Activated CD4-positive, alpha-beta memory T cell treated with anti-CD3 and anti-CD28 coated beads, Interleukin-2, amount 10 ng/mL, durations not matched to agents 7 days and 5 days (primary cell): ENCODE measurements at regions of chr14 and their contacts with region 1.

Region 1: DNA sequence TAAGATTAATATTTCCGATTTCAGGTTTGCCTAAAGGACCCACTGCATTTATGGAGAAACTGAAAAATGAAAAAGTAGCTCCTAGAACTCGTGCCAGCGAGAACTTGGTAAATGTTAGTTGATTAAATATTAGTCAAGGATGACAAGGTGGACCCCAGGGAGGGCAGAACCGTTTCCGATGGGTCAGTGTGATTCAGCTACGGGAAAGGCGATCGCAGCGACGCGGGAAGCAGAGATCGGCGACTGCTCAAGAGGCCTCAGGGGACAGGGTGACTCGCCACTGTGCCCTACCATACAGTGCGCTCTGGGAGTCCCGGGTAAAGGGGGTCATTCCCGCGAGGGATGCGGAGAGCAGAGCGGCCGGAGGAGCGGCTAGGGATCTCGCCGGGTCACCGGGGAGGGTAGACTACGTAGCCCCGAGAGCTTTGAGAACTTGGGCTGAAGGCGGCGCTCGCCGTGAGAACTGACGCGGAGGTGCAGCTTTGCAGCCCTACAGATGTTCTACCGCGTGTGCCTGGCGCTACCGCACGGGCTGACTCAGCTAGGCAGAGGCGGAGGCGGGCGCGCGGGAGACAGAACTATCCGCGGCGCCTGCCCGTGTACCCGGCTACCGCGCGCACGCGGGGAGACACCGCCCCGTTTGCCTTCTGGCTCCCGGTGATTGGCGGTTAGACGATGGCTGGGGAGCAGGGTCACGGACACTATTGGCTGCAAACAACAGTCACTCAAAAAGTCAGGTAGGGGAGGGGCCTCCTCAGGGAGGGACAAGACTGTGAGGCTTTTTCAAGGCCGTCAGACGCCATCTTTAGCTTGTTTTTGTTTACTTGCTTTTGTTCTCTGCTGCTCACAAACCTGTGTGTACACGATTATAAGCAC is 3.2 kb downstream of the C14orf93 start:
- DNase-seq: peak; percentile 98
- H3K4me3 Mint-ChIP-seq: peak overlapping the region; percentile 93
- H3K27ac Mint-ChIP-seq: peak overlapping the region; percentile 94
- H3K4me1 Mint-ChIP-seq: peaks cover 51% of the 10 kb centered on the region
- H3K27me3 Mint-ChIP-seq: no peaks in the 10 kb centered on the region

Region 2: DNA sequence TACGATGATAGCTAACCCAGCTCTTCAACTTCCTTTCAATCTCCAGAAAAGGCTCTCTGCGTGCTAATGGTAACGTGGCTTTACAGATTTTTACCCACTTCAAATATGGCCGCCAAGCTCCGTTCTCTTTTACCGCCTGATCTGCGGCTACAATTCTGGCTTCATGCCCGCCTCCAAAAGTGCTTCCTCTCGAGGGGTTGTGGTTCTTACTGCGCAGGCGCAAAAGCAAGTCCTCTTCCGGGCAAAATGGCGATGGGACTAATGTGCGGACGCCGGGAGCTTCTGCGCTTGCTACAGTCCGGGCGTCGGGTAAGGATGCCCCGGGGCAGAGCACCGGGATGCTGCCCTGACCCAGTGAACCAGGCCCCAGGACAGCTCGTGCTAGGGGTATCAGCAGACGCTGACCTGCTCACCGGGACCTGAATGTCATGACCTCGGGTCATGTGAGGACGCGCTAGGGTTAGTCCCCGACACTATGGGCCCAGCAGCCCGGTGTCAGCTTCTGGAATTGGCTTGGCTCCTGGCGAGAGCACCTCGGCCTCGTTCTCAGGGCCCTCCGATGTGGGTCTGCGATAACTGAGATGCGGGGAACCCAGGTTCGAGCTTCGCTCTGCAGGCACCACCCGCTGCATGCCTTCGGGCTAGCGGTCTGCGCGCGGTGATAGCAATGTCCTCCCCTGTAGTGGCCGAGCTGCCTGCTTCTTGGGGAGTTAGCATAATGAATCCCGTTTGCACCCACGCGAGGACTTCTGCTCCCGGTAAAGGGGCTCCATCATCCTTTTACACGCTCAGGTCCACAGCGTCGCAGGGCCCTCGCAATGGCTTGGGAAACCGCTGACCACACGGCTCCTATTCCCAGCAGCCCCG is 240.1 kb before region 1 on chr14 and contains the start of gene OXA1L:
- CTCF ChIA-PET with region 1: no interaction called
- POLR2A ChIA-PET with region 1: interaction called, 13 read pairs
- DNase-seq: peak; percentile 97
- H3K4me3 Mint-ChIP-seq: peak within 1 kb of the TSS; percentile 93
- H3K27ac Mint-ChIP-seq: peak within 1 kb of the TSS; percentile 97
- H3K4me1 Mint-ChIP-seq: peaks cover 35% of the 10 kb centered on the region
- H3K27me3 Mint-ChIP-seq: no peaks in the 10 kb centered on the region
- total RNA-seq, gene OXA1L: 118 to 122 TPM

Region 3: GRCh38 chr14:22918804-22919600 is 87.8 kb before region 1 on chr14 and contains the start of gene RBM23:
- CTCF ChIA-PET with region 1: interaction called, 9 read pairs
- POLR2A ChIA-PET with region 1: interaction called, 17 read pairs
- DNase-seq: peak; percentile 100
- H3K4me3 Mint-ChIP-seq: peak within 1 kb of the TSS; percentile 90
- H3K27ac Mint-ChIP-seq: peak within 1 kb of the TSS; percentile 98
- H3K4me1 Mint-ChIP-seq: peaks cover 42% of the 10 kb centered on the region
- H3K27me3 Mint-ChIP-seq: no peaks in the 10 kb centered on the region
- total RNA-seq, gene RBM23: 71.8 to 73.5 TPM

Region 4: DNA sequence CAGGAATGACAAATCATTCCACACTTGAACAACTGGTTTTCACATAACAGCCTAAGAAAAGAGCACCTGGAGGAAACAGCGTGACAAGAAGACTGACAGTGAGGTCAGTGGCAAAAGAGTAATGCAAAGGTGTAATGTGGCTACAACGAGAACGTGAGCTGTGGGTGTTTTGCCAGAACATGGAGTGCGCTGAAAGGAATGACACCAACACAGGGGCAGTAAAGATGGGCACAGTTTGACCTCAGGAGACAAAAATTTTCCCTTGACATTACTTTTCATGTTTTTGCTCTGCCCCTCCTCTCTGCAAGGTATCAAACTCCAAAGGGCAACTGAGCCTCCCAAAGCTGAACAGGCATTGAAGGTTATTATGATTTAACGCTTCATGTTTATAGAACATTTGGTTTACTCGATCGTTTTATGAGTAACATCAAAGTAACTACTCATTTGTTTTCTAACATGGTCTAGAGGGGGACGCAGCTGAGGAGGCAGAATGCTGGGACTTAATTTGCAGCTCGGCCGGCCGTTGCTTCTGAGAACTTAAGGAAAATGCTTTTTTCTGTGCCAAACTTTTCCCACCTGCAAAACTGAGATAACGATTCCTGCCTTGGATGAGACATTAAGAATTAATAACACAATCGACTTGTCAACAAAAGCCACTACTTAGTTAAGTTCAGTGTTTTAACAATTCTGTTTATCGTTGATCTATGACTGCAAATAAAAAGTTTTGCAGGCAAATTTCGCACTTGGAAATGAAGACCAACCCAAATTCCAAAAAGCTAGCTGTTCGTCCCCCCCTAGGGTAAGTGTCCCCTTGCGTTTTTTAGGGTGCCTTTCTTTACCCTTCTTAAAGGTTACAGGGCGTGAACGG is 50.8 kb before region 1 on chr14:
- CTCF ChIA-PET with region 1: interaction called, 11 read pairs
- POLR2A ChIA-PET with region 1: interaction called, 18 read pairs
- DNase-seq: no peak
- H3K4me3 Mint-ChIP-seq: peak overlapping the region; percentile 91
- H3K27ac Mint-ChIP-seq: peak overlapping the region; percentile 79
- H3K4me1 Mint-ChIP-seq: peaks cover 30% of the 10 kb centered on the region
- H3K27me3 Mint-ChIP-seq: peaks cover 3% of the 10 kb centered on the region

Region 5: GRCh38 chr14:23025151-23025814 is 18.5 kb after region 1 on chr14:
- CTCF ChIA-PET with region 1: interaction called, 12 read pairs
- POLR2A ChIA-PET with region 1: interaction called, 18 read pairs
- DNase-seq: no peak
- H3K4me3 Mint-ChIP-seq: no peak overlapping the region
- H3K27ac Mint-ChIP-seq: peak overlapping the region; percentile 52
- H3K4me1 Mint-ChIP-seq: peaks cover 38% of the 10 kb centered on the region
- H3K27me3 Mint-ChIP-seq: no peaks in the 10 kb centered on the region

Region 6: DNA sequence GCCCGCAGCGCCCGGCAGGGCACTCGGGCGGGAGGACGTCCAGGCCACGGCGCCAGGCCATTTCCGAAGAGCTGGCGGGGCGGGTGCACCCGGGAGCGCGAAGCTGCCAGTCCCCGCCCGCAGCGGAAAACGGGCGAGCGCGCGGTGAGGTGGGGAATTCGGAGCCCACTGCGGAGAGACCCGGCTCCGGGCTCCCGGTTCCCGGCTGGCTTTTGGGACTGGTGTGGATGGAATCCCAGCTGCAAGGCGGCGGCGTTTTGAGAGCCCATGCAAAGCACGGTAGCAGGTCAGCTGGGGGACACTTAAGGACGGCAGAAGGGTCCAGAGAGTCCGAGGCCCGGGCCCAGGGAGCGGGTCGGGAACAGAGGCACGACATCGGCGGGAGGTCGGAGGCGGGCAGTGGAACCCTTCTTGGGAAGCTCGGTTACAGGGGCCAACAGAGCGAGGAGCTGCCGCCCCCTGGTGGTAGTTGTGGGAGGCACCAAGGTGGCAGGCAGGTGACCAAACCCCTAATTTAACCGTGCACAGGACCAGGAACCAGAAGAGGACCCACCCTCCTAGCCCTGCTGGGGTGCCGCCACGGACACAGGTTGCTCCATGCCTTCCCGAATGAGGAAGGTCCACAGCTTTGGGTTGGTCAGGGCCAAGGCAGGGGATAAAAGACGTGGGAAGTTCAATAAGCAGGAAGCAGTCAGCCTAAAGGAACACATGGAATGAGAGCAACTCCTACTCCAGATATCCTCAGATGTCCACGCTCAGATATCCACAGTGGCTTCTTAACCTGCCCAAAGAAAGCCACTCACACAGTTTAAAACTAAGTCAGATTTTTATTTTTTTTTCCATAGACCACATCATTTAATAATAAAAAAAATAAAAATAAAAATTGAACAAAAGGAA is 51.2 kb after region 1 on chr14:
- CTCF ChIA-PET with region 1: interaction called, 25 read pairs
- POLR2A ChIA-PET with region 1: interaction called, 17 read pairs
- DNase-seq: peak; percentile 89
- H3K4me3 Mint-ChIP-seq: peak overlapping the region; percentile 77
- H3K27ac Mint-ChIP-seq: peak overlapping the region; percentile 58
- H3K4me1 Mint-ChIP-seq: peaks cover 17% of the 10 kb centered on the region
- H3K27me3 Mint-ChIP-seq: peaks cover 8% of the 10 kb centered on the region

Region 7: DNA sequence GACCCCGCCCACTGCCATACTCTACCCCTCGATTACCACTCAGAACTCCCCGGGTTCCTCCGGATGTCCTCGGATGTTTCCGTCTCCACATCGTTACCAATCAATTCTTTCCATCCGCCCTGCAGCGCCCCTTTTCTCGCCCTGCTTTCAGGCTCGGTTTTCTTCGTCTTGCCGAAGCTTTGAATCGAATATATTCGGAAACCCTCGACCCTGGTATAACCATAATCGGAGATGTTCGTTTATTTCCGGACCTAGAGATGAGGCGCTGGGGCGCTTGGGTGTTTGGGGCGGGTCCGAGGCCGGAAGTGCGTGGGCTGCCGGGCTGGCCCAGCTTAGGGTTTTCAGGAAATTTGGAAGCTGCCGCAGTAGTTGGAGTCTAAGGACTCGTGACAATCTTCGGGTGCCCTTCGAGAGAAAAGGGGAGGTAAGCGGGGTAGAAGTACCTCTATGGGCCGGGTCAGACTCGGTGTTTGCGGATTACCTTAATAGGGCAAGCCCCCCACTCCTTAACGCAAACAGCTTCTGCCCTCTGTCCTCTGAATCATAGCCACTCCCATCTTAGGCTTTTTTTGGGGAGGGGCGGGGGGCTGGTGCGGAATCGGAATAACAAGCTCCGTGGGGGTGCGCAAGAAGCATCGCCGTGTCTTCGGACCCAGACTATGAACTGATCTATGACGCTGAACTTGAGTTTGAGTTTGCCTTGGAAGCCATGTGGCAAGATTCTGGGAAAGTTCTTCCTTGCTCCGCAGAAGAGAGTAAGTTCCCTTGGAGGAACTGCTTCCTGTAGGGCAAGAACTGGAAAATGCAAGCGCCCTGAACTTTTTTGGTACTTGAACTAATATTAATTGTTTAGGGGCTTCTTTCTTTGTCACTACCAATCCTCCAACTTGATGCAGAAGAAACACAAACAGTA is 88.7 kb after region 1 on chr14 and contains the start of gene C14orf119:
- CTCF ChIA-PET with region 1: interaction called, 10 read pairs
- POLR2A ChIA-PET with region 1: interaction called, 23 read pairs
- DNase-seq: peak; percentile 100
- H3K4me3 Mint-ChIP-seq: no peak within 1 kb of the TSS
- H3K27ac Mint-ChIP-seq: no peak within 1 kb of the TSS
- H3K4me1 Mint-ChIP-seq: peaks cover 36% of the 10 kb centered on the region
- H3K27me3 Mint-ChIP-seq: no peaks in the 10 kb centered on the region
- total RNA-seq, gene C14orf119: 49.2 to 55.5 TPM